Activated CD4-positive, alpha-beta T cell treated with anti-CD3 and anti-CD28 coated beads for 36 hours (primary cell): ENCODE measurements at regions of chr17 and their contacts with region 1.

Region 1: DNA sequence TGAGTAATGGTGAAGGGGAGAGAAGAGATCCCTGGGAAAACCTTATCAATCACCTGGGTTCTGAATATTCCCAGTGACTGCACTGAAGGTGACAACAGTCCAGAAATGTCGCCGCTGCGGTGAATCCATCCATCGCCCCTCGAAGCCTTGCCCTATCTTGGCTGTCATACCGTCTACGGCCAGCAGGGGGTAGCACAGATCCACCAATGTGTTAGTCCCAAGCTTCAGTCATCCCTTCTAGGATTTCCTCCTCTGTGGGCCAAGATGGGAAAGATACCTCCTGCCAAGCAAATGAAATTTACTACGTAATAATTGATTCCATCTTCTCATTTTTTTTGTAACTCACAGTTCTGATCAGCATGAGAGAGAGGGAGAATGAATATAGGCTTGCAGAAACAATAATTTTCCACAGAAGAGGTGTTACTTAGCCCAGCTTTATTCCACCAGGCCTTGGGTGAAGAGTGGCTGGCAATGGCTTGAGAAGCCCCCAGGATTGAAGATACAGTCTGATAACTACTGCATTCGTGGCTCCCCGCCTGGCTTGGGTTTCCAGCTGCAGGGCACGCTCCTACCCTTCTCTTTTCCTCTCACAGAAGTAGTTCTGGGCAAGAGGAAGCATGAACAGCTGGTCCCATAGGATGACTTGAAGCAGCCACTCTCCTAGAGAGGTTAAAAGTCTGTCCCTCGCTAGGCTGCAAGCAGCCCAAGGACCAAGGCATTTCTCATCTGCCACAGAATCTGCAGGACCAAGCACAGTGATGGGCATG is 2.6 kb upstream of the FMNL1 start:
- DNase-seq: peak; percentile 92
- ATAC-seq: no peak
- H3K4me3 Mint-ChIP-seq: peak overlapping the region; percentile 78
- H3K27ac Mint-ChIP-seq: peak overlapping the region; percentile 79
- H3K4me1 Mint-ChIP-seq: peaks cover 33% of the 10 kb centered on the region
- H3K27me3 Mint-ChIP-seq: no peaks in the 10 kb centered on the region

Region 2: GRCh38 chr17:44887971-44888954 is 330.8 kb before region 1 on chr17:
- CTCF ChIA-PET with region 1: no interaction called
- POLR2A ChIA-PET with region 1: no interaction called
- intact Hi-C with region 1: no loop called
- DNase-seq: no peak
- ATAC-seq: no peak
- H3K4me3 Mint-ChIP-seq: no peak overlapping the region
- H3K27ac Mint-ChIP-seq: no peak overlapping the region
- H3K4me1 Mint-ChIP-seq: peaks cover 14% of the 10 kb centered on the region
- H3K27me3 Mint-ChIP-seq: no peaks in the 10 kb centered on the region

Region 3: DNA sequence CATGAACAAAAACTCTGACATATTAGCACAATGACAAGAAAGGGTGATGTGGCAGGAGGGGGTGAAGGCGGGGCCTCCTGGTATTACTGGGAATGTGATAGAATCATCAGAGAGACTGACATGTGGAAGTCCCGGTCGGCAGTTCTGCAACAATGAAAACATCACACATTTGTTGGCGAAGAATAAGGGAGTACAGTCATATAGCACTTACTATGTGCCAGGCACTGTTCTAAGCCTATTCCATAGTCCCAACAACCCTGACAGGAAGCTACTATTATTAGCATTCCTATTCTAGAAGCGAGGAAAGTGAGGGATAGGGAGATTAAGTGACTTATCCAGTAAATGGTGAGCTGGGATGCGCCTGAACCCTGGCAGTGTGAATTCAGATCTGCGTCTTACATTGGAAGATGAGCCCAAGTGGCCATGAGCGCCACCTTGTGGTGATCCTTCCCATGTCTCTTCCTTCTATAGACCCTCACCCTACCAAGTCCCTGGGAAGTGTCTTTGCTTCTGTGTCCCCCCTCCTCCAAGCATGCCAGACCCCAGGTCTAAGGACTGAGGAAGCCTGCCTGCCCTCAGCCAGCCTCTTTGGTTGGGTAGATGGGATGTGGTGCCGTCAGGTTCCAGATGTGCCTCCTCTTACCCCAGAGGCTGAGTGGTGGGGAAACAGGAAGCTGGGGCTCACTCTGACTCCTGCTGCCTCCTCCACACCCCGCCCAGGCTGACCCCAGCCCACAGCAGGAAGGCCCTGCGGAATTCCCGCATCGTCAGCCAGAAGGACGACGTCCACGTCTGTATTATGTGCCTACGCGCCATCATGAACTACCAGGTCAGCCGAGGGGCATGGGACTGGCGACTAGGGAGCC is 16.6 kb after region 1 on chr17:
- CTCF ChIA-PET with region 1: interaction called, 334 read pairs
- POLR2A ChIA-PET with region 1: interaction called, 6 read pairs
- intact Hi-C with region 1: loop called (anchors 1 kb)
- DNase-seq: peak; percentile 89
- ATAC-seq: peak; percentile 64
- H3K4me3 Mint-ChIP-seq: no peak overlapping the region
- H3K27ac Mint-ChIP-seq: peak overlapping the region; percentile 67
- H3K4me1 Mint-ChIP-seq: peaks cover 60% of the 10 kb centered on the region
- H3K27me3 Mint-ChIP-seq: no peaks in the 10 kb centered on the region

Region 4: GRCh38 chr17:45256114-45256966 is 37.3 kb after region 1 on chr17:
- CTCF ChIA-PET with region 1: interaction called, 12 read pairs
- POLR2A ChIA-PET with region 1: no interaction called
- intact Hi-C with region 1: no loop called
- DNase-seq: no peak
- ATAC-seq: peak; percentile 56
- H3K4me3 Mint-ChIP-seq: no peak overlapping the region
- H3K27ac Mint-ChIP-seq: peak overlapping the region; percentile 43
- H3K4me1 Mint-ChIP-seq: peaks cover 57% of the 10 kb centered on the region
- H3K27me3 Mint-ChIP-seq: no peaks in the 10 kb centered on the region

Region 5: DNA sequence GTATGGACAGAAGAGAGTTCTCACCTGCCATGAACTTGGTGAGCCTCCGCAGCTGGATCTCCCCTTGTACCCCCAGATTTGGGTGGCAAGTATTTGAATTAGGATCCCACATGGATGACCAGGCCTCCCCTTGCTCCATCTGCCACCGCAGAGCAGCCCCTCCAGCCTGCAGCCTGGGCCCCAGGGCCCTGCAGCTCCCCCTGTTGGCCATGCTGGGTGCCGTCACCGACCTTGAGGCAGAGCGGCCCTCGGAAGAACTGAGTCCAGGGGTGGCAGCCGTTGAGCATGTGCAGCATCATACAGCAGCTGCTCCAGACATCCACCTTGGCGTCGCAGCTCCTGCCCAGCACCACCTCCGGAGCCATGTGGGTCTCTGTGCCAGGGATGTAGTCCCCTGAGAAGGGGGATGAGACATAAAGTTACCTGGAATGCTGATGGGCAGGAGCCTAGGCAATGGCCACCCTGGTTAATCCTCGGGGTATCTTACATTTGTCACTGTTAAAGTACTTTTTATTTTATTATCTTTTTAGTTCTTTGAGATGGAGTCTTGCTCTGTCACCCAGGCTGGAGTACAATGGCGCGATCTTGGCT is 51.8 kb after region 1 on chr17:
- CTCF ChIA-PET with region 1: interaction called, 54 read pairs
- POLR2A ChIA-PET with region 1: no interaction called
- intact Hi-C with region 1: loop called in 1 of 2 experiments (anchors 1 kb)
- DNase-seq: peak; percentile 78
- ATAC-seq: peak; percentile 75
- H3K4me3 Mint-ChIP-seq: no peak overlapping the region
- H3K27ac Mint-ChIP-seq: peak overlapping the region; percentile 47
- H3K4me1 Mint-ChIP-seq: peaks cover 18% of the 10 kb centered on the region
- H3K27me3 Mint-ChIP-seq: no peaks in the 10 kb centered on the region

Region 6: DNA sequence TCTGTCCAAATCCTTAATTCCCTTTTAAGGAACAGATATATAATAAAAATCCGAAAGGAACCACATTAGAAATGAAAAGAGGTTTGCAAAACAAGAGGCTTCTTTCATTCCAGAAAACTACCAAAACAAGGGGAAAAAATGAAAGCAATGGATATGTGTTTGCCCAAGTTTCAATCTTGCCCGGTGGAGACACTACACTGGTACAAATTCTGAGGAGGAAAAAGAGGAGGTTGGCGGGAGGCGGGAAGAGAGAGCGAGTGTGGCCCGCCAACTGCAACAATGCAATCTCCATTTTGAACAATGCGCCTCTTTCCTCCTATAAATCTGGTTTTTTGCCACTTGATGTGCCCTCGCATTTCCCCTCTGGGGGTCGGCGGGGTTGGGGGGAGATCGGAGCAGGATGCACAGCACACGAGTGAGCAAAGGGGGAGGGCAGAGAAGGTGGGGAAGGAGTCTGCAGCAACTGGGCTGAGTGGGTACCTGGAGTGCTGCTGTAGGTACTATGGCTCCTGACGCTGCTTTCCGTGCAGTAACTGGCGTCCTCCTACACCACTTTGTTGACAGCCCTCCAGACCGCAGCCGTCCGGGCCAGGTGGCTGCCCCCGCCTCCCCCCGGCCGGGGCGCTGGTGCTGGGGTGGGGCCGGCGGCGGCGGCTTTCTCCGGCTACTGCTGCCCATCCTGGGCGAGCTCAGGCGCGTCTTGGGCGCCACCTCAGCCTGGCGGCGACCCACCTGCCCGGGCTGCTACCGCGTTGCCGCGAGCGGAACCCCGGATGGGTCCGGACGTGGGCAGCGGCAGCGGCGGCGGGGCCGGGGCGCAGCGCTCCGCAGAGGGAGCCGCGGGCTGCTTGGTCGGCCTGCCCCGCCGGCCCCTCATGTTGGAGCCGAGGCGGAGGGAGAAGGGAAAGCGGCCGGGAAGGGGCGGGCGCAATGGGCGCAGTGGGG is 365.3 kb after region 1 on chr17:
- CTCF ChIA-PET with region 1: no interaction called
- POLR2A ChIA-PET with region 1: no interaction called
- intact Hi-C with region 1: loop called in 1 of 2 experiments (anchors 2 kb)
- DNase-seq: peak; percentile 78
- ATAC-seq: peak; percentile 48
- H3K4me3 Mint-ChIP-seq: peak overlapping the region; percentile 90
- H3K27ac Mint-ChIP-seq: peak overlapping the region; percentile 94
- H3K4me1 Mint-ChIP-seq: peaks cover 24% of the 10 kb centered on the region
- H3K27me3 Mint-ChIP-seq: no peaks in the 10 kb centered on the region